Activated CD8-positive, alpha-beta T cell treated with anti-CD3 and anti-CD28 coated beads, Interleukin-2, amount 10 ng/mL, durations not matched to agents 7 days and 5 days (primary cell): ENCODE measurements at regions of chr9 and their contacts with region 1.

Region 1: DNA sequence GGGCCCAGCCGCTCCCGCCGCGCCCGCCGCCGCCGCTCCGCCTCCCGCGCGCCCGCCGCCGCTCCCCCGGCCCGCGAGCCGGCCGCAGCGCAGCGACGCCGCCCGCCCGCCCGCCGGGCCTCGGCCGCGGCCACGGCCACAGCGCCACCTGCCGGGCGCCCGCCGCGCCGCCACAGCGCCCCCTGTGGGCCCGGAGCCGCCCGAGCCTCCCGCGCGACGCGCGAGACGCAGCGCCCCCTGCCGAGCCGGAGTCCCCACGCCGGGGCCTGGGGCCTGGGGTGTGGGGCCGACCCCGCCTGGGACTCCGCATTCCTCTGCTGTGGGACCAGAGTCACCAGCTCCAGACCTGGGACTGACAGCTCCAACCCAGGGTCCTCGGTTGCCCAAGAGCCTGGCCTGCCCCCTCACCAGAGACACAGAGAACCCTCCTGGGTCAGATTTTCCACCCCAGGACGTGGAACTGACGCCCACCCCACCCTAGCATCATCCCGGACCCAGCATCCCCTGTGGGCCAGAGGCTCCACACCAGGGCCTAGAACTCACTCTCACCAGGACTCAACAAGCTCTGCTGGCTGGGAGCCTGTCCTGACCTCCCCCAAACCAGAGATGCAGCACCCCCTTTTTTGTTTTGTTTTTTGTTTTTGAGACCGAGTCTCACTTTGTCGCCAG is at the start of gene RAPGEF1:
- DNase-seq: peak; percentile 82
- ATAC-seq: peak; percentile 82
- H3K4me3 Mint-ChIP-seq: peak within 1 kb of the TSS; percentile 91
- H3K27ac Mint-ChIP-seq: peak within 1 kb of the TSS; percentile 85
- H3K4me1 Mint-ChIP-seq: peaks cover 64% of the 10 kb centered on the region
- H3K27me3 Mint-ChIP-seq: no peaks in the 10 kb centered on the region
- total RNA-seq, gene RAPGEF1: 128 TPM

Region 2: DNA sequence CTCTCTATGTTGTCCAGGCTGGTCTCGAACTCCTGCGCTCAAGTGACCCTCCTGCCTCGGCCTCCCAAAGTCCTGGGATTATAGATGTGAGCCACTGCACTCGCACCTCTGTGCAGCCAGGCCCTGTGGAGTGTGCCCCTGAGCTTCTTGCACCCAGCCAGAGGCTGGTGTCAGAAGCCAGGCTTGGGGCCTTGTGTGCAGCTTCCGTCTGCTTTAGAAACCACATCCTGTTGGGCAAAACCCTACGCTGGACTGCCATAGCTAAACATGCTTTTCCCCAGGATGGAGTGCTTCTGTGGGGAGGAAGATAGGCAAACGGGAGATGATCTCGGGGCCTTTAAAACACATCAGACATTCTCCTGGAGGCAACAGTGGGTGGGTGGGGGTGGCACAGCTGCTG is 154.7 kb before region 1 on chr9:
- CTCF ChIA-PET with region 1: interaction called, 54 read pairs
- POLR2A ChIA-PET with region 1: interaction called, 3 read pairs
- DNase-seq: peak; percentile 77
- ATAC-seq: peak; percentile 87
- H3K4me3 Mint-ChIP-seq: peak overlapping the region; percentile 42
- H3K27ac Mint-ChIP-seq: peak overlapping the region; percentile 95
- H3K4me1 Mint-ChIP-seq: peaks cover 59% of the 10 kb centered on the region
- H3K27me3 Mint-ChIP-seq: no peaks in the 10 kb centered on the region

Region 3: DNA sequence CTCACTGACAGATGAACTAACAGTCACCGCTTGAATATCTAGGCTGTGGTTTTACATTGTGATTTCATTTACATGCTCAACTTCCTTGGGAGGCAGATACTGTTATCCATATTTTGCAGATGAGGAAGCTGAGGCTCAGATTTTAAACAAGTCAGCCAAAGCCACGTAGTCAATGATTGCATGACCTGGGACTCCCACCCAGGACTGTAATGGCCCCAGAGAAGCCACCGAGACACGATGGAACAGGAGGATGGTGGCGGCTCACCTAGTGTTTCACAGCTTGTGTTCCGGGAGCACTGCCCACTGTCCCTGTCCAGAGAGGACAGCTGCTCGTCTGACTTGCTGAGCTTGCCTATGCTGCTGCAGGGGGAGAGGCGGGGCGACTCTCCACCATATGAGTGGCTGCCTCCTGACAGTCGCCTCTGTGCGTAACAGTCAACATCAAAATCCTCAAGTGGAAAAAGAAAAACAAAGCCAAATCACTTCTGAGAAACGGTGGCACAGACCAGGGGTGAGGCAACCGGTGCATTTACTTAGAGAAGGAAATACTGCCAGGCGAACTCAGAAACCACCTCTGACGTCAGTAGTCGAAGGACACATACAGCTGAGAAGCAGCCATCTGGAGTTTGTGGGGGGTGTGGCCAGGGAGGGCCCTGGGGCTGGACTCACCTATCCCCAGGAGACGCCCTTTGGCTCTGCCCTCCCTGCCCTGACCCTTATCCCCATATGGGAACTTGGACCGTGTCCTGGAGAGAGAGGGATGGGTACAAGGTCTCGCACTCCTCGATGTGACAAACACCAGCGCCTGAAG is 112.3 kb before region 1 on chr9:
- CTCF ChIA-PET with region 1: interaction called, 14 read pairs
- POLR2A ChIA-PET with region 1: interaction called, 3 read pairs
- DNase-seq: peak; percentile 65
- ATAC-seq: peak; percentile 81
- H3K4me3 Mint-ChIP-seq: peak overlapping the region; percentile 34
- H3K27ac Mint-ChIP-seq: peak overlapping the region; percentile 81
- H3K4me1 Mint-ChIP-seq: peaks cover 45% of the 10 kb centered on the region
- H3K27me3 Mint-ChIP-seq: no peaks in the 10 kb centered on the region

Region 4: GRCh38 chr9:131656356-131657036 is 83.6 kb before region 1 on chr9:
- CTCF ChIA-PET with region 1: interaction called, 21 read pairs
- POLR2A ChIA-PET with region 1: interaction called, 3 read pairs
- DNase-seq: peak; percentile 80
- ATAC-seq: peak; percentile 95
- H3K4me3 Mint-ChIP-seq: peak overlapping the region; percentile 13
- H3K27ac Mint-ChIP-seq: peak overlapping the region; percentile 84
- H3K4me1 Mint-ChIP-seq: peaks cover 65% of the 10 kb centered on the region
- H3K27me3 Mint-ChIP-seq: no peaks in the 10 kb centered on the region

Region 5: GRCh38 chr9:131709771-131710454 is 30.2 kb before region 1 on chr9:
- CTCF ChIA-PET with region 1: interaction called, 26 read pairs
- POLR2A ChIA-PET with region 1: no interaction called
- DNase-seq: no peak
- ATAC-seq: peak; percentile 80
- H3K4me3 Mint-ChIP-seq: peak overlapping the region; percentile 26
- H3K27ac Mint-ChIP-seq: peak overlapping the region; percentile 63
- H3K4me1 Mint-ChIP-seq: peaks cover 70% of the 10 kb centered on the region
- H3K27me3 Mint-ChIP-seq: no peaks in the 10 kb centered on the region